MCF 10A (cell line): ENCODE measurements at regions of chr4 and their contacts with region 1.

Region 1: DNA sequence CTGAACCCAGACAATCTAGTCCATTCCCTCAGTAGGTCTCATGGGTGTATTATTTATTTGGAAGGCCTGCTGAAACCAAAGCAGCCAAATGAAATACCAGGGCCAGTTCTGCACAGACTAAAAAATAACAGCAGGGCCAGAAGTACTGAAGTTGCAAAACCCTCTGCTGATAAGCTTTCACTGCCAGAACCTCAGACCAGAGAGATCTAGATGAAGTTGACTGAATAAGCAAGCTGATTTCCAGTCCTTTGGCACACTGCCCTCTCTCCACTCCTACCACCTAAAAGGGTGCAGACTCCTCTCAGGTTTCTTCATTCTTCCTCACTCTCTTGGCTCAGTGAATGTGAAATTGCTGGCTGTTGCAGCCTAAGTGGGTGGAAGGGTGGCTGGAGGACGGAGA is 276.7 kb upstream of the KLF3 start:
- DNase-seq: peak; percentile 84
- H3K4me3 Mint-ChIP-seq: no peak overlapping the region
- H3K27ac Mint-ChIP-seq: no peak overlapping the region
- H3K4me1 Mint-ChIP-seq: peaks cover 28% of the 10 kb centered on the region
- H3K27me3 Mint-ChIP-seq: no peaks in the 10 kb centered on the region
- CTCF ChIP-seq: no peak

Region 2: DNA sequence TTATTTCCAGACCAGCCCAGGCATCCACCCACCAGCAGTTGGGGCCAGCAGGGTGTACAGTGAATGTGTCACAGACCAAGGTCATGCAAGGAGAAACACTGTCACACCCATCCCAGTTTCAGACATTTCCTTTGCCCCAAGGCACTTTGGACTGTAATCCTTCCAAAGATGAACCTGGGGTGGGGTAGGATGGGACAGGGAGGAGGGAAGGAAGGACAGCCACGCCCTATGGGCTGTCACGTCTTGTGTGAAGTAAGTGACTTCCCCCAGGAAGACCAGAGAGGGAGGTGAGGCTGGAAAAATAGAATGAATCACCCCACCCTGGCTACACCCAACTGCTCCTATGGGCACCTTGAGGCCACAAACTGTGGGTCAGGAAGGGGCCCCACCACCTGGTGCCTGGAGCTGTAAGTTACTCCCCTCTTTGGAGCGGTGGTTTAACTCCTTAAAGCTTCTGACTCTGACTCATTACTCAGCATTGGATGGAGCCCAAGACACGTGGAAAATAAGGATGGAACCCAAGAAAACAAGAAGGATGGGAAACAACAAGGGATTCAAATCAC is 73.3 kb before region 1 on chr4:
- CTCF ChIA-PET with region 1: interaction called, 3 read pairs
- POLR2A ChIA-PET with region 1: interaction called, 106 read pairs
- intact Hi-C with region 1: loop called (anchors 1 kb)
- DNase-seq: peak; percentile 89
- H3K4me3 Mint-ChIP-seq: no peak overlapping the region
- H3K27ac Mint-ChIP-seq: peak overlapping the region; percentile 44
- H3K4me1 Mint-ChIP-seq: peaks cover 47% of the 10 kb centered on the region
- H3K27me3 Mint-ChIP-seq: no peaks in the 10 kb centered on the region
- CTCF ChIP-seq: no peak

Region 3: GRCh38 chr4:38366456-38366855 is 20.9 kb before region 1 on chr4:
- CTCF ChIA-PET with region 1: interaction called, 5 read pairs
- POLR2A ChIA-PET with region 1: interaction called, 33 read pairs
- intact Hi-C with region 1: no loop called
- DNase-seq: no peak
- H3K4me3 Mint-ChIP-seq: no peak overlapping the region
- H3K27ac Mint-ChIP-seq: peak overlapping the region; percentile 17
- H3K4me1 Mint-ChIP-seq: peaks cover 36% of the 10 kb centered on the region
- H3K27me3 Mint-ChIP-seq: no peaks in the 10 kb centered on the region
- CTCF ChIP-seq: no peak

Region 4: GRCh38 chr4:38620790-38621684 is 233.7 kb after region 1 on chr4:
- CTCF ChIA-PET with region 1: no interaction called
- POLR2A ChIA-PET with region 1: interaction called, 18 read pairs
- intact Hi-C with region 1: no loop called
- DNase-seq: peak; percentile 95
- H3K4me3 Mint-ChIP-seq: no peak overlapping the region
- H3K27ac Mint-ChIP-seq: peak overlapping the region; percentile 57
- H3K4me1 Mint-ChIP-seq: peaks cover 29% of the 10 kb centered on the region
- H3K27me3 Mint-ChIP-seq: no peaks in the 10 kb centered on the region
- CTCF ChIP-seq: no peak

Region 5: GRCh38 chr4:38663801-38664705 is 276.7 kb after region 1 on chr4 and contains the start of gene KLF3:
- CTCF ChIA-PET with region 1: interaction called, 3 read pairs
- POLR2A ChIA-PET with region 1: interaction called, 91 read pairs
- intact Hi-C with region 1: loop called (anchors 5 kb)
- DNase-seq: peak; percentile 83
- H3K4me3 Mint-ChIP-seq: peak within 1 kb of the TSS; percentile 92
- H3K27ac Mint-ChIP-seq: peak within 1 kb of the TSS; percentile 76
- H3K4me1 Mint-ChIP-seq: peaks cover 11% of the 10 kb centered on the region
- H3K27me3 Mint-ChIP-seq: no peaks in the 10 kb centered on the region
- CTCF ChIP-seq: no peak
- total RNA-seq, gene KLF3: 45.3 and 51.2 TPM in 2 replicates